ENCODE measurements at regions of chr9 and their contacts with region 1.

Region 1: DNA sequence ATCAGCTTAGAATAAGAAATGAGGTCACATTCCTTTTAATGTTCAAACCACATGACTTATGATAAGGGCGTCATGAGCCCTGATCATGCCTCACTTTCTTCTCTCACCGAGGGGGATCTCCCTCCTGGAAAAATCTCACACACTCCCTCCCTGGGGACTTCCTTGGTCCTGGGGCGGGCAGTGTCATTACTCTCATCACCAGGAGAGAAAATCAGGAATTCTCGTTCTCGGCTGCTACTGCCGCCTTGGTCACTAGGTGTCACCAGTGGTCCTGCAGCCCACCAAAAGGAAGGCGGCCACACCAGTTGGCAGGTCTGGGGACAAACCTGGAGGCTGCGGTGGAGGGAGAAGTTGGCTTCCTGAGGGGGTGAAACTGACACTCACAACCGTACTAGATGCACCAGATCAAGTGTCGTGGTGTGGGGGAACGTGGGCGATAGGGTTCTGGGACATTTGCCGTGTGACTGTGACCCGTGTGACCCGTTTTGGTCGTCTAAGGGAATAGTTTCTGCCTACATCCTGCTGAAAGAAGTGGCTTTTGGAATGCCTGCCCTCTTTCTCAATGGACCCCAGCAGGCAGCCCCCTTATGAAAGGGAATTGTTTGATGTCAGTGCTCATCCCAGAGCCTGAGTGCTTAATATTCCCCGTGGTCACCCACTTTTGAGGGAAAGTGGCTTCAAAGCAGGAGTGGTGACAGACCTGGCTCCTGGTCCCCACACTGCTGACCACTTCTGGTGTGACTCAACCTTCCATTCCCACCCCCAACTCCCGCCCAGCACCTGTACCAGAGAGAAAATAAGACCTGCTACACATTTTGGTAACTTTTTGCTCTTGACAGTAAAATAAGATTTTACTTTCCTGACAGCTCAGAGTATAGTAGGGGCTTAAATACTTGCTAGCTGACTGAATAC is 63.2 kb downstream of the ACER2 start:
- DNase-seq: peak; percentile 77
- H3K4me3 Mint-ChIP-seq: peak overlapping the region; percentile 9
- H3K27ac Mint-ChIP-seq: no peak overlapping the region
- H3K4me1 Mint-ChIP-seq: peaks cover 14% of the 10 kb centered on the region
- H3K27me3 Mint-ChIP-seq: peaks cover 3% of the 10 kb centered on the region

Region 2: GRCh38 chr9:18442629-18443491 is 1029.1 kb before region 1 on chr9:
- CTCF ChIA-PET with region 1: no interaction called
- intact Hi-C with region 1: no loop called
- DNase-seq: peak; percentile 73
- H3K4me3 Mint-ChIP-seq: no peak overlapping the region
- H3K27ac Mint-ChIP-seq: no peak overlapping the region
- H3K4me1 Mint-ChIP-seq: peaks cover 4% of the 10 kb centered on the region
- H3K27me3 Mint-ChIP-seq: peaks cover 18% of the 10 kb centered on the region

Region 3: GRCh38 chr9:19431361-19432171 is 40.4 kb before region 1 on chr9:
- CTCF ChIA-PET with region 1: no interaction called
- intact Hi-C with region 1: no loop called
- DNase-seq: no peak
- H3K4me3 Mint-ChIP-seq: no peak overlapping the region
- H3K27ac Mint-ChIP-seq: no peak overlapping the region
- H3K4me1 Mint-ChIP-seq: no peaks in the 10 kb centered on the region
- H3K27me3 Mint-ChIP-seq: no peaks in the 10 kb centered on the region

Region 4: GRCh38 chr9:19517202-19517942 is 45.4 kb after region 1 on chr9:
- CTCF ChIA-PET with region 1: no interaction called
- intact Hi-C with region 1: loop called (anchors 2 kb)
- DNase-seq: peak; percentile 21
- H3K4me3 Mint-ChIP-seq: no peak overlapping the region
- H3K27ac Mint-ChIP-seq: peak overlapping the region; percentile 15
- H3K4me1 Mint-ChIP-seq: peaks cover 31% of the 10 kb centered on the region
- H3K27me3 Mint-ChIP-seq: peaks cover 11% of the 10 kb centered on the region

Region 5: DNA sequence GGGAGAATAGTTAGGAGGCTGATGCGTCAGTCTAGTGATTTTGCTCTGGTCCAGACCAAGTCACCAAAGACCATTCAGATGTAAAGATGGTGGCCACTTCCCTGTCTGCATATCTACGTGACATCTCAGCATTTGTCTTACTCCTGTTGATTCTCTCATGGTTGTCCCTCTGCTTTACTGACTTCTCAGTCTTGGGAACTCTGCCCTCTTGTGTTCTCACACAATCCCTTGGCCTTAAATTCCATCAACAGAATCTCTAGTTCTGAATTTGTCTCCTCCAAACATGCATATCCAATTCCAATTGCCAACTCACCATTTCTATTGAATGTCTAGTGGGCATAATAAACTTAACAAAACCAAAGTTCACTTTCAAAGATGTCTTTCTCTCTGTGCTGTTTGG is 169.1 kb after region 1 on chr9:
- CTCF ChIA-PET with region 1: no interaction called
- intact Hi-C with region 1: loop called (anchors 2 kb)
- DNase-seq: no peak
- H3K4me3 Mint-ChIP-seq: no peak overlapping the region
- H3K27ac Mint-ChIP-seq: no peak overlapping the region
- H3K4me1 Mint-ChIP-seq: no peaks in the 10 kb centered on the region
- H3K27me3 Mint-ChIP-seq: peaks cover 15% of the 10 kb centered on the region